Psoas muscle (tissue), 8 donors: ENCODE measurements at regions of chr10 and their contacts with region 1.

Region 1: DNA sequence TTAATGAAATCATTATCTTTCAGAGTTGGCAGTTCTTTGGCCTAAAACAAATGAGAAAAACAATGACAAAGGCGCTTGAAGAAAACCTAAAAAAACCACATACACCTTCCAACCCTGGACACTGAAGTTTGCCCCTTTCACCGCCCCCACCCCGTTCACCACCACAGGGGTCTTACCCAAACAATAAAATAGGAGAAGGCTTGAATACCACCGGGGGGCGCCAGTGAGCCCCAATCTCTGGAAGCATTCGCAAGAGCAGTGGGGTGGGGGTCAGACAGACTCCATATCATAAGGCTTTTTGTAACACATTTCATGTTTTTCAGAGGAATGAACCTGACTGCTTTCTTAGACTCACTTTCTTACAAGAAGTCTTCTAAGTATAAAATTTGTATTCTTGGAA is 163.6 kb downstream of the PIP4K2A start:
- DNase-seq: peak; percentile 28 to 71
- ATAC-seq: no peak
- H3K4me3 ChIP-seq: no peak overlapping the region
- H3K27ac ChIP-seq: no peak overlapping the region
- H3K4me1 ChIP-seq: peaks cover 31% of the 10 kb centered on the region
- H3K27me3 ChIP-seq: no peaks in the 10 kb centered on the region
- CTCF ChIP-seq: peak; percentile 38

Region 2: DNA sequence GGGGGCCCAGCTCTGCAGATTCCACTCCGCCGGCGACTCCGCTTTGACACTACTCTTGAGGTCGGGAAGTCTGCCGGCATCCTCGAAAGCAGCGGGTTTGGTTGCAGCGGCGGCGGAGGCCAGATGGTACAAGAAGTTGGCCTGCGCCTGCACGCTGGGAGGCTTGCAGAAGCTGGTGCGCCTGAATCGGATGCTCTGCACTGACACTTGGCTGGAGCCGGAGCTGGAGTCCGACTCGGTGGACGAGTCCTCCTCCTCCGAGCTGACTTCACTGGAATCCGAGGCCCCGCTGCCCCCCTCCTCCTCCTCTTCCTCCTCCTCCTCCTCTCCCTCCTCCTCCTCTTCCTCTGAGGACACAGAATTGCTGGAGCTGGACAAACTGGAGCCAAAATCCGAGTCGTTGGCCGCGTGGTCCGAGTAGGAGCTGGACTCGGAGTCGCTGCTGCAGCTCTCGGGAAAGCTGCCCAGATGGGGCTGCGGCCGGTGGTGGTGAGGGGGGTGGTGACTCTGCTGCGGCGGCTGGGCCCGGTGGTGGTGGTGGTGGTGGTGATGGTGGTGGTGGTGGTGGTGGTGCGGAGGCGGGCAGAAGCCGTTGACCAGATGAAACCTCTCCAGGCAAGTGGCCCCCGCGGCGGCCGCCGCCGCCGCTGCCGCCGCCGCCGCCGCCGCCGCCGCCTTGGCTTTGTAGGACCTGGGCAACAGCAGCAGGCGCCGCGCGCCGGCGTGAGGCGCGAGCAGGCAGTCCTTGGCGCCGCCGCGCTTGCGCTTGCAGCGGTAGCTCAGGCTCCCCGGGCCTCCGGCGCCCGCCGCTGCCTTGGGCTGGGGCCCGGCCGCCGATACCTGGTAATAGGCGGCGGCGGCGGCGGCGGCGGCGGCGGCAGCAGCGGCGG is 1034.2 kb before region 1 on chr10:
- intact Hi-C with region 1: loop called in 1 of 2 experiments (anchors 10 kb)
- DNase-seq: peak; percentile 73 to 91
- ATAC-seq: peak; percentile 55 to 88 (median 80)
- H3K4me3 ChIP-seq: peak overlapping the region; percentile 77
- H3K27ac ChIP-seq: peak overlapping the region; percentile 74
- H3K4me1 ChIP-seq: peaks cover 23% of the 10 kb centered on the region
- H3K27me3 ChIP-seq: peaks cover 0 to 8% (median 0%) of the 10 kb centered on the region in 3 donors
- CTCF ChIP-seq: no peak

Region 3: DNA sequence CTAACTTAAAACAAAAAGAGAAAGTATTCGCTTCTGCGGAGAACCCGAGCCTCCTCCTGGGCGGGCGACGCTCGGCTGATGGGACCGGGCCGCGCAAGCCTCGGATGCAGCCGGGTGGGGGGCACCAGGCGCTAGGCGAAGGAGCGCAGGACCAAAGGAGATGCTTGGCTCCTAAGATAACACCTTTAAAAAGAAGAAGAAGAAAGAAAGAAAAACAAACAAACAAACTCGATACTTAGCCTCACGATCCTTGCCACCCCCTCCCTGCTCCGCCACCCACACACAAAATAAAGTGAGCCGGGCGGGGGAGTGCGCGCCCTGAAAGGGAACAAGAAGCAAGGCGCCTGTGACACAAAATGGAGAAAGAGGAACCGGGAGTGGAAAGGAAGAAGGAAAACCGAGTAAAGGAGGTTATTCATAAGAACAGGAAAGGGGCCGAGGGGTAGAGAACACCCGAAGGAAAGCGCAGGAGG is 298.9 kb before region 1 on chr10:
- intact Hi-C with region 1: loop called in 1 of 2 experiments (anchors 10 kb)
- DNase-seq: peak; percentile 63 to 79
- ATAC-seq: peak; percentile 65 to 81 (median 68)
- H3K4me3 ChIP-seq: peak overlapping the region; percentile 94
- H3K27ac ChIP-seq: peak overlapping the region; percentile 87
- H3K4me1 ChIP-seq: peaks cover 4% of the 10 kb centered on the region
- H3K27me3 ChIP-seq: no peaks in the 10 kb centered on the region
- CTCF ChIP-seq: no peak

Region 4: GRCh38 chr10:22436884-22437619 is 113.7 kb before region 1 on chr10:
- intact Hi-C with region 1: loop called (anchors 5 to 10 kb)
- DNase-seq: peak; percentile 92 to 94
- ATAC-seq: peak; percentile 87 to 93 (median 91)
- H3K4me3 ChIP-seq: peak overlapping the region; percentile 92
- H3K27ac ChIP-seq: peak overlapping the region; percentile 92
- H3K4me1 ChIP-seq: peaks cover 9% of the 10 kb centered on the region
- H3K27me3 ChIP-seq: no peaks in the 10 kb centered on the region
- CTCF ChIP-seq: no peak

Region 5: DNA sequence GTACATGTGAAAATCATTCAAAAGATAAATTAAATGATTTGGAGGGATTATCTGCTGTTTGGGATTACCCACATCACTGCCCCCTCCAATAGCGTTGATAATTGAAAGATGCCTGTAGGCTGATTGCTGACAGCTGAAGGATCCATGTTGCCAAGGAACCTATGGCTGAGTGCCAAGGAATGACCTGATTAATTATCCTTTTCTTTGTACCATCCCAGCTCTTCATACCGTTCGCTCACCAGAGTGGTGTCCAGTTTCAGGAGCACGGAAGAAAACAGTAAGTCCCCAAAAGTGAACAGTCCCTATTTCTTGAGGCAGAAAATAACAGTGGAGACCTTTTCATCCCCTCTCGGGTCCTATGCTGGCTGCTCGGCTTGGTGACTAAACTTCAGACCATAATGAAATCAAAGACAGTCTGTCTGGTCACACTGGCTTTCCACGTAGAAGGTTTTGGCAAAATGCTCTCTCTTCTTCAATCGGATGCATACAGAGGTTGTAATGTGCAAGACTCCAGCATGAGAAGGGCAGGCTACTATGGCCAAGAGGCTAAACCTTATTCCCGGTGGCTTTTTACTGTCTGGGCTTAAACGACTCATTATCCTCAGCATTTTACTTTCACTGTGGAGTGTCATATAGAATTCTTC is 96.7 kb before region 1 on chr10:
- intact Hi-C with region 1: no loop called
- DNase-seq: no peak
- ATAC-seq: no peak
- H3K4me3 ChIP-seq: no peak overlapping the region
- H3K27ac ChIP-seq: no peak overlapping the region
- H3K4me1 ChIP-seq: no peaks in the 10 kb centered on the region
- H3K27me3 ChIP-seq: no peaks in the 10 kb centered on the region
- CTCF ChIP-seq: no peak